ENCODE measurements at regions of chr12 and their contacts with region 1.

Region 1: GRCh38 chr12:96378319-96378718 is 21.9 kb downstream of the CDK17 start:
- DNase-seq: no peak
- ATAC-seq: no peak
- H3K4me3 Mint-ChIP-seq: no peak overlapping the region
- H3K27ac Mint-ChIP-seq: no peak overlapping the region
- H3K4me1 Mint-ChIP-seq: peaks cover 63% of the 10 kb centered on the region
- H3K27me3 Mint-ChIP-seq: no peaks in the 10 kb centered on the region
- CTCF ChIP-seq: no peak

Region 2: DNA sequence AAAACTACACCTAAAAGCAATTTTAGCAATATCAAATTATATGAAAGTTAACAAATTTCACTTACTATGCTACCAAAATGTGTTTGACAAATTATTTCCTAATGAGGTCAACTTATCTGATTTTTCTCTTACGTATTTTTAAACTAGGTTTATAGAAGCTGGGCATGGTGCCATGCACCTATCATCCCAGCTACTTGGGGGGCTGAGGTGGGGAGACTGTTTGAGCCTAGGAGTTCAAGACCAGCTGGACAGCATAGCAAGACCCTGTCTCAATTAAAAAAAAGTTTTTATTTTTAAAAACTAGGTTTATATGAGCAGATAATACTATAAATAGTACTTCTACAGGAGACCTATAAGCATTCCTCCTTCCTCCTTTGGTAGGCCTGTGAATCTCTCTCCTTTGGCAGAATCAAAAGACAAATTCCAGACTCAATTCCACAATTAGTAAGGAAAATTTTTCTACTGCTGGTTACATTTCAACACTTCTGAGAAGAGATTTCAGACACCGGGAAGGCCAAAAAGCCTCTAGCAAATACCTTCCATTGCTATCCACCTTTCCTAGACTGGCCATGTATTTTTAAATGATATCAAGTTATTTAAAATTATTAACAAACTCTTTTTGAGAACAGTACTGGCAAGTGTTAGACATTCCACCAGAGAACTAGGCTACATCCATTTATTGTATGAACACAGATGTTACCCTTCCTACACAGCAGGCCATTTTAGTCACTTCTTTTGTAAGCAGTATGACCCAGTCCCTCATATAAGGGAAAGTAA is 12.5 kb before region 1 on chr12:
- CTCF ChIA-PET with region 1: no interaction called
- POLR2A ChIA-PET with region 1: no interaction called
- intact Hi-C with region 1: loop called (anchors 2 kb)
- DNase-seq: no peak
- ATAC-seq: no peak
- H3K4me3 Mint-ChIP-seq: no peak overlapping the region
- H3K27ac Mint-ChIP-seq: no peak overlapping the region
- H3K4me1 Mint-ChIP-seq: peaks cover 63% of the 10 kb centered on the region
- H3K27me3 Mint-ChIP-seq: no peaks in the 10 kb centered on the region
- CTCF ChIP-seq: no peak

Measured in activated B cell treated with CpG ODN at 0.5 μM for 24 hours (primary cell).